ENCODE measurements at regions of chr2 and their contacts with region 1.

Region 1: GRCh38 chr2:86079981-86080911 is 25.4 kb downstream of the POLR1A start:
- DNase-seq: peak; percentile 62
- ATAC-seq: peak; percentile 78
- H3K4me3 Mint-ChIP-seq: peak overlapping the region; percentile 28
- H3K27ac Mint-ChIP-seq: peak overlapping the region; percentile 86
- H3K4me1 Mint-ChIP-seq: peaks cover 35% of the 10 kb centered on the region
- H3K27me3 Mint-ChIP-seq: no peaks in the 10 kb centered on the region
- CTCF ChIP-seq: peak; percentile 40

Region 2: DNA sequence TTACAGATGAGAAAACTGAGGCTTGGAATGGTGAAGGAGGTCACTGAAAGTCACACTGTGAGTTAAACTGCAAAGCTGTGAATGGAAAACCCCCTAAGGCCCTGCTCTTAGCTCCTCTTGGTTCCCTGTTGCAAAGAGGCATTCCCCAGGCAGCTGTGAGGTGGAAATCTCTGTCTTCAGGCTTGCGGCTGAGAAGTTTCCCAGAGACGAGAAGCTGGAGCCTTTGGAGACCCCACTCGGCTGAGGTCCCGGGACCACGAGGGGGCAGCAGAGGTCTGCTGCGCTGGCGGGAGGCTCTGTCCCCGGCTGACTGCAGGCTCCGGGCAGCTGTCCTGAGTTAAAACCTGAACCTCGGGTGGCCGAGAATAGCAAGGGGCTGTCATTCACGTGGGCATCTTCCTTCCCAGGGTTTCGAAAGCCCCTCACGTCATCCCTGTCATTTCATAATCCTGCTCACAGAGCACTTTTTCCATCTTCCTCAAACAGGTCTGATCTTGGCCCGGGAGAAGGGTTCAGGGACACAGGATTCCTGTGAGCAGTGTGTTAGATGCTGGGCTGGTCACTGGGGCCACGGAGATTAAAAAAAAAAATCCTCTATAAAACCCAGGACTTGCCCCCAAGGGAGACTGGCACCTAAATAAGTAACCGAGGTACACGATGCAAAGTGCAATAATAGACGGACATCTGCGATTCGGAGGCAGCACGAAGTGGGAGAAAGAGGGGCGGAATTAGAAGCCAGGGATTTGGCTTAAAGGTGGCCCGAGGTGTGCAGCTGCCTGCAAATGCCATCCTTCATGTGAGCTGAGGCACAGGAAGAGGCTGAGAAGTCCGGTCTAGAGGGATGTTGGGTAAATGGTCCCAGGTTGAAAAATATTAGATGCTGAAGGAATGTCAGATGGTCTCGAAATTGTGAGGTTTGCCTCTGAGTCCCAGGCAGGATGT is 351.1 kb before region 1 on chr2:
- CTCF ChIA-PET with region 1: interaction called, 16 read pairs
- POLR2A ChIA-PET with region 1: no interaction called
- intact Hi-C with region 1: loop called (anchors 1 kb)
- DNase-seq: peak; percentile 76
- ATAC-seq: peak; percentile 94
- H3K4me3 Mint-ChIP-seq: no peak overlapping the region
- H3K27ac Mint-ChIP-seq: peak overlapping the region; percentile 41
- H3K4me1 Mint-ChIP-seq: peaks cover 2% of the 10 kb centered on the region
- H3K27me3 Mint-ChIP-seq: peaks cover 18% of the 10 kb centered on the region
- CTCF ChIP-seq: peak; percentile 32

Region 3: GRCh38 chr2:85750587-85751575 is 329.4 kb before region 1 on chr2:
- CTCF ChIA-PET with region 1: interaction called, 3 read pairs
- POLR2A ChIA-PET with region 1: no interaction called
- intact Hi-C with region 1: loop called (anchors 1 kb)
- DNase-seq: no peak
- ATAC-seq: peak; percentile 56
- H3K4me3 Mint-ChIP-seq: no peak overlapping the region
- H3K27ac Mint-ChIP-seq: no peak overlapping the region
- H3K4me1 Mint-ChIP-seq: peaks cover 65% of the 10 kb centered on the region
- H3K27me3 Mint-ChIP-seq: peaks cover 19% of the 10 kb centered on the region
- CTCF ChIP-seq: no peak

Region 4: GRCh38 chr2:86017901-86018896 is 62.0 kb before region 1 on chr2:
- CTCF ChIA-PET with region 1: interaction called, 3 read pairs
- POLR2A ChIA-PET with region 1: no interaction called
- intact Hi-C with region 1: loop called (anchors 2 kb)
- DNase-seq: no peak
- ATAC-seq: no peak
- H3K4me3 Mint-ChIP-seq: no peak overlapping the region
- H3K27ac Mint-ChIP-seq: peak overlapping the region; percentile 85
- H3K4me1 Mint-ChIP-seq: peaks cover 67% of the 10 kb centered on the region
- H3K27me3 Mint-ChIP-seq: no peaks in the 10 kb centered on the region
- CTCF ChIP-seq: no peak

Region 5: DNA sequence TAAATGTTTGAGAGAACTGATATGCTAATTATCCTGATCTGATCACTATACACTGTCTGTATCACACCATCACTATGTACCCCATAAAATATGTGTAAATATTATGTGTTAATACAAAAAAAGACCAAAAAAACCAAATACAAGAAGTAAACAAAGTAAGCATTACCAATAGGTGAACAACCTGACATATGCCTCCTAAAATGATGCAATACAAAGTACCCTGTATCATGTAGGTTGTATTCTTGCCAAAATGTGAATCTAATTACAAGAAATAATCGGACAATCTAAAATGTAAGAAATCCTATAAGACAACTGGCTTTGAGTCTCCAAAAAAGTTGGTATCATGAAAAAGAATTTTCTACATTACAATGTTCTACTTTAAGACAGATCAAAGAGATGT is 17.7 kb after region 1 on chr2:
- CTCF ChIA-PET with region 1: interaction called, 3 read pairs
- POLR2A ChIA-PET with region 1: no interaction called
- intact Hi-C with region 1: loop called (anchors 1 kb)
- DNase-seq: no peak
- ATAC-seq: no peak
- H3K4me3 Mint-ChIP-seq: no peak overlapping the region
- H3K27ac Mint-ChIP-seq: no peak overlapping the region
- H3K4me1 Mint-ChIP-seq: peaks cover 6% of the 10 kb centered on the region
- H3K27me3 Mint-ChIP-seq: no peaks in the 10 kb centered on the region
- CTCF ChIP-seq: no peak

Region 6: DNA sequence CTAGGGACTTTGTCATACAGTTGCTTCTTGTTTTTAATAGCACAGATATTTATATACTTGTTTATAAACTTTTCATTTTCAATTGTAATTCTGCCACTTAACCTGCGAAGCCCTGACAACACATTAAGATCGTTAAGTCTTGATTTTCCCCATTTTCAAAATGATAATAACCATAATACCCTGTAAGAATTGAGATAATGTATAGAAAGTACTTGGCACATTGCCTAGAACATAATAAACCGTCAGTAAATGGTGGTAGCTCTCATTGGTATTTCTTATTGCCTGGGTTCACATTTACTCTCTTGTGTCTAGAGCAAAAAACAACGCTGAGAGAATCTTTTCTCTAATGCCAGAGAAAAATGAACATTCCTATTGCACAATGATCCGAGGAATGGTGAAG is 44.4 kb after region 1 on chr2:
- CTCF ChIA-PET with region 1: no interaction called
- POLR2A ChIA-PET with region 1: no interaction called
- intact Hi-C with region 1: no loop called
- DNase-seq: no peak
- ATAC-seq: no peak
- H3K4me3 Mint-ChIP-seq: no peak overlapping the region
- H3K27ac Mint-ChIP-seq: no peak overlapping the region
- H3K4me1 Mint-ChIP-seq: peaks cover 8% of the 10 kb centered on the region
- H3K27me3 Mint-ChIP-seq: no peaks in the 10 kb centered on the region
- CTCF ChIP-seq: no peak

Region 7: GRCh38 chr2:86263715-86264562 is 183.7 kb after region 1 on chr2:
- CTCF ChIA-PET with region 1: no interaction called
- POLR2A ChIA-PET with region 1: no interaction called
- intact Hi-C with region 1: no loop called
- DNase-seq: no peak
- ATAC-seq: no peak
- H3K4me3 Mint-ChIP-seq: no peak overlapping the region
- H3K27ac Mint-ChIP-seq: no peak overlapping the region
- H3K4me1 Mint-ChIP-seq: no peaks in the 10 kb centered on the region
- H3K27me3 Mint-ChIP-seq: peaks cover 8% of the 10 kb centered on the region
- CTCF ChIP-seq: no peak

Region 8: DNA sequence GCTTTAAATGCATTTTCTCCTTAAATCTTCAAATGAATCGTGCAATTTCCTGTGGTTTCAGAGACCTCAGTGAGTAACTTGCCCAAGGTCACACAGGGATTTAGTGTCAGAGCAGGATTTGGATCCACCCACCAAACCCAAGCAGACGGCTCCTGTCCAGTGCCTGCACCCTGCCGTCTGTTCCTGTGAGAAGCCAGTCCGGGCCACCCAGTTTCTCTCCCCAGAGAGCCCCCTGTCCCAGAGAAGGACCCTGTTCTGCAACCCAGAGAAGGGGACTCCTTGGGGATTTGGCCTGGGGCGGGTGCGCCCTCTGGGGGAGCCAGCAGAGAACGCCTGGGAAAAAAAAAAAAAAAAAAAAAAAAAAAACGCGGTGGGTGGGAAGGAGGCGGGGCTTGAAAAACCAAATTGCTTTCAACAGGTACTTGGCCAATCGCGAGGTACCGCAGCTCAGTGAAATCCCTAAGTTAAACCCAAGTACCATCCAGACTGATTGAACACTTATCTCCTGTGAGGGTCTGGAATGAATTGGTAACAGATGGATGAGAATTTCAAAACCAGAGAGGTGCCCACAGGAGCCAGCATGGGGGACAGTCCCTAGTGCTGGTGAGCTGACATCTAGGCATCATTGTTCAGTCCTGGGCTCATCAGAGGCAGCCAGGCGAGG is 288.0 kb after region 1 on chr2:
- CTCF ChIA-PET with region 1: no interaction called
- POLR2A ChIA-PET with region 1: no interaction called
- intact Hi-C with region 1: no loop called
- DNase-seq: peak; percentile 22
- ATAC-seq: peak; percentile 84
- H3K4me3 Mint-ChIP-seq: peak overlapping the region; percentile 35
- H3K27ac Mint-ChIP-seq: no peak overlapping the region
- H3K4me1 Mint-ChIP-seq: peaks cover 11% of the 10 kb centered on the region
- H3K27me3 Mint-ChIP-seq: no peaks in the 10 kb centered on the region
- CTCF ChIP-seq: no peak